Activated T-helper 2 cell treated with anti-CD3 and anti-CD28 coated beads, Interferon-gamma antibody, Interleukin-2, Interleukin-4, amounts not matched to agents 10 μg/mL and 5 μg/mL and 100 μg/mL, durations not matched to agents 14 hours and 24 hours and 36 hours (primary cell): ENCODE measurements at regions of chr9 and their contacts with region 1.

Region 1: GRCh38 chr9:36400332-36401163 is 479 bp upstream of the RNF38 start:
- DNase-seq: peak; percentile 87
- H3K4me3 Mint-ChIP-seq: peak overlapping the region; percentile 94
- H3K27ac Mint-ChIP-seq: peak overlapping the region; percentile 97
- H3K4me1 Mint-ChIP-seq: peaks cover 34% of the 10 kb centered on the region
- H3K27me3 Mint-ChIP-seq: no peaks in the 10 kb centered on the region

Region 2: GRCh38 chr9:36258208-36258988 is 142.2 kb before region 1 on chr9 and contains the start of gene GNE:
- intact Hi-C with region 1: loop called (anchors 2 kb)
- DNase-seq: peak; percentile 97
- H3K4me3 Mint-ChIP-seq: peak within 1 kb of the TSS; percentile 86
- H3K27ac Mint-ChIP-seq: peak within 1 kb of the TSS; percentile 84
- H3K4me1 Mint-ChIP-seq: peaks cover 7% of the 10 kb centered on the region
- H3K27me3 Mint-ChIP-seq: no peaks in the 10 kb centered on the region
- total RNA-seq, gene GNE: 27.7 and 28.5 TPM in 2 replicates

Region 3: DNA sequence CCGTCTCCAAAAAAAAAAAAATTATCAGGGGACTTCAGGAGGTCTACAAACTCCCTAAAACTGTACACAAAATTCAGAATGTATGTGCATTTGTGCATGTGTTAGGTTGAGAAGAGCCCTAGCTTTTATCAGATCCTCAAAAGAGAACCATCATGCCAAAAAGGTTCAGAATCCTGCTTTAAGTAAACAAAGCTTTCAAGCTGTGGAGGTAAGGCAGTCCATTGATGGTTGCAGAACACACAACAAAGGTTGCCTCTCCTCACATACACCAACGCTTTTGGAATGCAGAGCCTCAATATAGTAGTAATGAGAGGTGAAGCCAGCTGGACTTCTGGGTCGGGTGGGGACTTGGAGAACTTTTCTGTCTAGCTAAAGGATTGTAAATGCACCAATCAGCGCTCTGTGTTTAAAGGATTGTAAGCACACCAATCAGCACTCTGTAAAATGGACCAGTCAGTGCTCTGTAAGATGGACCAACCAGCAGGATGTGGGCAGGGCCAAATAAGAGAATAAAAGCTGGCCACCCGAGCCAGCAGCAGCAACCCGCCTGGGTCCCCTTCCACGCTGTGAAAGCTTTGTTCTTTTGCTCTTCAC is 57.4 kb after region 1 on chr9:
- intact Hi-C with region 1: loop called (anchors 2 kb)
- DNase-seq: no peak
- H3K4me3 Mint-ChIP-seq: peak overlapping the region; percentile 32
- H3K27ac Mint-ChIP-seq: peak overlapping the region; percentile 47
- H3K4me1 Mint-ChIP-seq: peaks cover 34% of the 10 kb centered on the region
- H3K27me3 Mint-ChIP-seq: no peaks in the 10 kb centered on the region

Region 4: DNA sequence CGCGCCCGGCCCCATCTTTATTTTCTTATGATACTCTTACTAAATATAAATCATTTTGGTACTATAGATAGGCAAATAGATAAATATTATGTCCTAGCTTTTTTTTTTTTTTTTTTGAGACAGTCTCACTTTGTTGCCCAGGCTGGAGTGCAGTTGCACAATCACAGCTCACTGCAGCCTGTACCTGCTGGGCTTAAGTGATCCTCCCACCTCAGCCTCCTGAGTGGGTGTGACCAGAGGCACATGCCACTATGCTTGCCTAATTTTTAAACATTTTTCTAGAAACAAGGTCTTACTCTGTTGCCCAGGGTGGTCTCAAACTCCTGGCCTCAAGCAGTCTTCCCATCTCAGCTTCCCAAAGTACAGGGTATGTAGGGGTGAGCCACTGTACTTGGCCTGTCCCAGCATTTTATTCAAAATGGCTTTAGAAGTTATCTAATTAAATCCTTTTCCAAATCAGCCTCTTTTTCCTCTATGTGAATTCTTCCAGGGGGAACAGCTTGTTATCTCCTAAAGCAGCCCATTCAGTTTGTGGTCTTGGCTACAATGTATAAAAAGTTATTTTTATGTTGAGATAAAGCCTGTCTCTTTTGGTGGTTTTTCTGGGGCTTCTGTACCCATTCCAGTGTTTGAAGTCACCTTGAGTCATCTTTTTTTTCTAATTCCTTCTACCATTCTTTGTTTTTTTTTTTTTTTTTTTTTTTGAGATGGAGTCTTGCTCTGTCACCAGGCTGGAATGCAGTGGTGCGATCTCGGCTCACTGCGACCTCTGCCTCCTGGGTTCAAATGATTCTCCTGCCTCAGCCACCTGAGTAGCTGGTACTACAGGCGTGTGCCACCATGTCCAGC is 184.3 kb after region 1 on chr9:
- intact Hi-C with region 1: no loop called
- DNase-seq: no peak
- H3K4me3 Mint-ChIP-seq: no peak overlapping the region
- H3K27ac Mint-ChIP-seq: no peak overlapping the region
- H3K4me1 Mint-ChIP-seq: peaks cover 10% of the 10 kb centered on the region
- H3K27me3 Mint-ChIP-seq: no peaks in the 10 kb centered on the region

Region 5: DNA sequence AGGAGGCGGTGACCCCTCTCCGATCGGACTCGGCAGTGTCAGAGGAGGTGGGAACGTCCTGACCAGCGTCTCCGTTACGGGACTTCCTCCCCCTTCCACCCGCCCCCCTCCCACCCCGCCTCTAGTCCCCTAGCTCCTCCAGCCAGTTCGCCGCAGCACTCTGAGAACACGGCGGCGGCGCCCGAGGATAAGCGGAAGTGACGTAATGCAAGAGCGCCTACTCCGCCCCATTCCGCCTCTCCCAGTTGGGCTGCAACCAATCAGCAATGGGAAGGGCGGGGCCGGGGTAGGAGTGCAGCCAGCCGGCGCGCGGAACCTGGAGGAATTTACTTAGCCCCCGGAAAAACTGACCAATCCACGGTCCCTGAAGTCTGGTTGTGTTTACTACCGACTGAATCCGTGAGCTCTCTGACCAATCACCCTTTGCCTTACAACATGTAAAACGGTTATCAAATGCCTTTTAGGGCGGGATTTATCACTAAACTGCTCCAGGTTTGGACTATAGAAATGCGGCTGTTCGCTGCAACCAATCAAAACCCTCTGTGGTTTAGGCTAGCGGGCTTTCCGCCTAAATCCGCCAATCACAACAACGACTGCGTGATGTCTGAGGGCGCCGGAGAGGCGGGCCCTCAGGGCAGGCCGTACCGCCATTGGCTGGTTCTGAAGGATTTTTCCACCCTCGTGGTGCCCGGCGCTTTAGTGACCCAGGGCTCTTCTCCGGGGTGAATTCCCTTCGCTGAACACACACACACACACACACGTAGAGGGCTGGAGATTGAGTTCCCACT is 1064.9 kb after region 1 on chr9 and contains the start of gene ZBTB5:
- intact Hi-C with region 1: loop called (anchors 10 kb)
- DNase-seq: peak; percentile 98
- H3K4me3 Mint-ChIP-seq: peak within 1 kb of the TSS; percentile 96
- H3K27ac Mint-ChIP-seq: peak within 1 kb of the TSS; percentile 99
- H3K4me1 Mint-ChIP-seq: peaks cover 25% of the 10 kb centered on the region
- H3K27me3 Mint-ChIP-seq: no peaks in the 10 kb centered on the region
- total RNA-seq, gene ZBTB5: 10.6 and 11.0 TPM in 2 replicates